Sigmoid colon (tissue), 7 donors: ENCODE measurements at regions of chr22 and their contacts with region 1.

Region 1: GRCh38 chr22:32796865-32797573 is 4.5 kb upstream of the TIMP3 start:
- DNase-seq: peak; percentile 88
- H3K4me3 ChIP-seq: no peak overlapping the region
- H3K27ac ChIP-seq: peak overlapping the region in 3 of 4 donors; percentile 22 to 45 (median 36)
- H3K4me1 ChIP-seq: peaks cover 0 to 19% (median 14%) of the 10 kb centered on the region in 4 donors
- H3K27me3 ChIP-seq: no peaks in the 10 kb centered on the region
- CTCF ChIP-seq: peak; percentile 73 to 91 (median 86)
- EP300 ChIP-seq: no peak
- POLR2A ChIP-seq: no peak

Region 2: GRCh38 chr22:32474635-32475467 is 322.2 kb before region 1 on chr22 and contains the start of gene FBXO7:
- intact Hi-C with region 1: loop called (anchors 5 kb)
- DNase-seq: peak; percentile 96
- H3K4me3 ChIP-seq: peak within 1 kb of the TSS; percentile 66 to 99 (median 94)
- H3K27ac ChIP-seq: peak within 1 kb of the TSS; percentile 88 to 100 (median 100)
- H3K4me1 ChIP-seq: peaks cover 0 to 41% (median 27%) of the 10 kb centered on the region in 4 donors
- H3K27me3 ChIP-seq: no peaks in the 10 kb centered on the region
- CTCF ChIP-seq: peak in 1 of 4 experiments; percentile 16
- EP300 ChIP-seq: peak in 1 of 4 donors; percentile 44
- POLR2A ChIP-seq: peak; percentile 48 to 72
- total RNA-seq, gene FBXO7: 69.0 to 83.6 (median 81.9) TPM

Region 3: DNA sequence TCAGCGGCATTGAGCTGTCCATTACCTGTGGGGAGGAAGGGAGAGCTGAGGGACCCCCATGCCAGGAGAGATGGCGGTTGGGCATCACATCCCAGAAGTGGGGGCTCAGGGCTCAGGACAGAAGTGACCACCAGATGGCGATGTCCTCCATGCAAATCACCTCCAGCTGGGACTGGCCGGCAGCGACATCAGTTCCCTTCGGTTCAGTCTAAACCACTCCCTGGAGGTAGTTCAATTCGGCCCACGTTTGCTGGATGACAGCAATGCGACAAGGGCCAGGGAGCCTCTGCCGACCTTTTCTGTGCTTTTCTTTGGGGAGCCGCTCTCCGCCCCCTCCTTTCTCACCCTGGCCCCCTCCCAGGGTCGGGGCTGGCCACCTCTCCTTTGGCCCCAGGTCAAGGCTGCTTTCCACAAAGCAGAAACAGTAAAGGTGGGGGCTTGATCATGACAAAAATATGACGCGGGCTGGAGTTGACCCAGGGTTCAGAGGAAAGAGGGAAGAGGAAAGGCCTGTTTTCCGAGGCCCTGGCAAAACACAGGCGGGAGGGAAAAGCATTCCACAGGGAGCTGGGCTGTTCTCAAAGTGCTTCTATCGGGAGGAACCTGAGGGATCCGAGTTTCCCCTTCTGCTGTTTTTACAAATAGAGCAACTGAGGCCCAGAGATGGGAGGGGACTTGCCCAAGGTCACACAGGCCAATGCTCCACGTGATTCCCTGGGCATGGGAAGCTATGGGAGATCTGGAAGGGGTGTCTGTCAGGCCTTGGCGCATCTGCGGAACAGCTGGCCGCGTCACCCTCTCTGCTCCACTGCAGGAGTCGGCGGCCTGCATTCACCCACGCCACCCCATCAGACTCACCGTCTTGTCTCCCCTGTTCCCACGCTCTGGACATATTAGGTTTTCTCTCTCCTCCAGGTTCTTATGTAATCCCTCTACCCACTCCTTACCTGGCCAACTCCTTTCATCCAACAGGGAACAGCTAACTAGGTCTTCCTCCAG is 267.7 kb before region 1 on chr22:
- intact Hi-C with region 1: loop called (anchors 2 kb)
- DNase-seq: peak; percentile 96
- H3K4me3 ChIP-seq: no peak overlapping the region
- H3K27ac ChIP-seq: peak overlapping the region; percentile 46 to 71 (median 64)
- H3K4me1 ChIP-seq: peaks cover 0 to 32% (median 25%) of the 10 kb centered on the region in 4 donors
- H3K27me3 ChIP-seq: no peaks in the 10 kb centered on the region
- CTCF ChIP-seq: peak; percentile 86 to 91 (median 89)
- EP300 ChIP-seq: no peak
- POLR2A ChIP-seq: no peak

Region 4: DNA sequence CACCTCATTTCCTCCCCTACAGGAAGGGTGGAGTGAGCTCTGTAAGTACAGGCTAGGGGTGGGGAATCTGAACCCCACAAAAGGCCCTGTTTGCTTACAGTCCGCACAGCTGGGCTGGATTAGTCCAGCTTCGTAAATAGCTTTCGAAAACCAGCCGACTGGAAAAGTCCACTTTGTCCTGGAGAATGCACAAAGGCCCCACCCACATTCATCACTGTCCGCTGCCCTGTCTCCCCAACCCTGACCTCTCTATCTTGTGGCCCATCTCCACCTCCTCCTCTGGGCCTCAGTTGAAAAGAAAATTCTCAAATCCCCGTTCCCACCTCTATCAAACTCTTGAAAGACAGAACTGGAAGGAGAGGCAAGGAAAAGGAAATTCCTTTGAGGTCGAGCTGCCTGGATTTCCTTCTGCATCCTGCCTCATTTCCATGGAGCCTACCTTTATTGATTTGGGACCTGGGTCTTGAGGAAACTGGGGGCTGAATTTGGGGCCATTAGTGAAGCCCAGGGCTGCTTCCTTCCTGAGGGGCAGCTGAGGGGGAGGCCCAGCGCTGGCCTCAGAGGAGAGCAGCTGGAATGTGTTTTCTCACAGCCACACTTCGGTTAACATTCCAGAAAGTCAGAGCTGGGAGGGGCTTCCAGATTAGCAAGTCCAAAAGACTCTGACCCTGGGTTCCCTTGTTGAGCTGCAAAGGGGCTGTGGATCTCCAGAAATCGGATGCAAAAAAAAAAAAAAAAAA is 174.8 kb before region 1 on chr22:
- intact Hi-C with region 1: loop called (anchors 5 kb)
- DNase-seq: peak; percentile 89
- H3K4me3 ChIP-seq: no peak overlapping the region
- H3K27ac ChIP-seq: peak overlapping the region; percentile 72 to 88 (median 82)
- H3K4me1 ChIP-seq: peaks cover 0 to 59% (median 54%) of the 10 kb centered on the region in 4 donors
- H3K27me3 ChIP-seq: no peaks in the 10 kb centered on the region
- CTCF ChIP-seq: no peak
- EP300 ChIP-seq: no peak
- POLR2A ChIP-seq: no peak

Region 5: DNA sequence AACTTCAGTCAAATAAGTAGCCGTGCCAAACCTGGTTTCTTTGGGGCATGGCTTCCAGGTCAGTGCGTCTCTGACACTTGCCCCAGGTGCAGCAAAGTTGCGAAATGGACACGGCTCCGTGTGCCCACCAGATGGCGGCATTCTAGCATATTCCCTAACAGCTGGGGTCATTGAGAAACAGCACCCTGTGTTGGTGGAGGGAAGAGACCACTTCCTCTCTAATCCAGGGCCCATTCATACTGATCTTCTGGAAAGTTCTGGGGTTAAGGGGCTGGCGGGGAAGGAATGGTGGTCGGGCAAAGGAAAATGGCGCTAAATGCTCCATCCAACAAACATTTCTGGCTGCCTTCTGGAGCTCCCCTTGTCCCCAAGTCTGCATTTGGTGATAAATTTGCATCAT is 136.7 kb before region 1 on chr22:
- intact Hi-C with region 1: loop called (anchors 2 kb)
- DNase-seq: peak; percentile 84
- H3K4me3 ChIP-seq: no peak overlapping the region
- H3K27ac ChIP-seq: no peak overlapping the region
- H3K4me1 ChIP-seq: peaks cover 0 to 4% (median 0%) of the 10 kb centered on the region in 4 donors
- H3K27me3 ChIP-seq: no peaks in the 10 kb centered on the region
- CTCF ChIP-seq: peak; percentile 48 to 76 (median 67)
- EP300 ChIP-seq: no peak
- POLR2A ChIP-seq: no peak

Region 6: GRCh38 chr22:32911503-32911902 is 114.5 kb after region 1 on chr22:
- intact Hi-C with region 1: loop called (anchors 5 kb)
- DNase-seq: no peak
- H3K4me3 ChIP-seq: no peak overlapping the region
- H3K27ac ChIP-seq: no peak overlapping the region
- H3K4me1 ChIP-seq: peaks cover 0 to 31% (median 25%) of the 10 kb centered on the region in 4 donors
- H3K27me3 ChIP-seq: no peaks in the 10 kb centered on the region
- CTCF ChIP-seq: no peak
- EP300 ChIP-seq: no peak
- POLR2A ChIP-seq: no peak

Region 7: GRCh38 chr22:32971276-32971675 is 174.3 kb after region 1 on chr22:
- intact Hi-C with region 1: loop called (anchors 5 kb)
- DNase-seq: no peak
- H3K4me3 ChIP-seq: no peak overlapping the region
- H3K27ac ChIP-seq: peak overlapping the region in 3 of 4 donors; percentile 58 to 75 (median 60)
- H3K4me1 ChIP-seq: peaks cover 0 to 26% (median 23%) of the 10 kb centered on the region in 4 donors
- H3K27me3 ChIP-seq: no peaks in the 10 kb centered on the region
- CTCF ChIP-seq: no peak
- EP300 ChIP-seq: peak in 1 of 4 donors; percentile 4
- POLR2A ChIP-seq: no peak